ENCODE measurements at regions of chr2 and their contacts with region 1.

Region 1: DNA sequence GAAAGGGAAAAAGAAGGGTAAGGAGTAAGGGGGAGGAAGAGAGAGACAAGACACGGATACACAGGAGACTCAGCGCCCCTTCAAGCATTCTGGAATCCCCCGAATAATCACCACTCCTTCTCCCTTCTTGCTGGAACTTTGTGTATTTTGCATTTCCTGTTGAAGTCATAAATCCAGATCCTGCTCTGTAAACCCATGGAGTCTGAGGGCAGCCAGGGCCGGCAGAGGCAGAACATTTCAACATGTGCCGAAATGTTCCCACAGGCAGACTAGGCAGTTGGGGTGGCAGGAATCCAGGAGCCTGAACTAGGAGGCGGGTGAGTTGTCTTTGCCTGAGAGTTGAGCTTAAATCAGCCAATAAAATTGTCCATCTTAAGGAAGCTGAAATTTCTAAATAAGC is 193.1 kb downstream of the SH3RF3 start:
- DNase-seq: peak; percentile 92
- ATAC-seq: peak; percentile 58 to 75

Region 2: DNA sequence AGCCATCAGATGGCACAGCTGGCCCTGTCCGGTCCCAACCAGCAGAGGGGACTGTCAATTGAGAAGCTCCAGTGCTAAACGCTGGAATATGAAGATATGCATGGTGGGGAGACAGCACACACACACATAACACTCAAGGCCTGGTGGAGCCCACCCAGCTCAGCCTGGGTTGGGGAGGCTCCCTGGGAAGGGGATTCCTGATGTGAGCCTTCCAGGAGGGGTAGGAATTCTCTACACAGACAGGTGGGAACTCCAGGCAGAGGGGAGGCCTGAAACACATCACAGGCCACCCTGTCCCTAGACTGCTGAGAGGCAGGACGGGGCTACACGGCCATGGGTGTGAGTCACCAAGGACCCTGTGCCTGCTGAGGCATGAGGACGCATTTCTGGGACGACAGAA is 242.5 kb before region 1 on chr2:
- intact Hi-C with region 1: no loop called
- DNase-seq: no peak
- ATAC-seq: no peak

Region 3: DNA sequence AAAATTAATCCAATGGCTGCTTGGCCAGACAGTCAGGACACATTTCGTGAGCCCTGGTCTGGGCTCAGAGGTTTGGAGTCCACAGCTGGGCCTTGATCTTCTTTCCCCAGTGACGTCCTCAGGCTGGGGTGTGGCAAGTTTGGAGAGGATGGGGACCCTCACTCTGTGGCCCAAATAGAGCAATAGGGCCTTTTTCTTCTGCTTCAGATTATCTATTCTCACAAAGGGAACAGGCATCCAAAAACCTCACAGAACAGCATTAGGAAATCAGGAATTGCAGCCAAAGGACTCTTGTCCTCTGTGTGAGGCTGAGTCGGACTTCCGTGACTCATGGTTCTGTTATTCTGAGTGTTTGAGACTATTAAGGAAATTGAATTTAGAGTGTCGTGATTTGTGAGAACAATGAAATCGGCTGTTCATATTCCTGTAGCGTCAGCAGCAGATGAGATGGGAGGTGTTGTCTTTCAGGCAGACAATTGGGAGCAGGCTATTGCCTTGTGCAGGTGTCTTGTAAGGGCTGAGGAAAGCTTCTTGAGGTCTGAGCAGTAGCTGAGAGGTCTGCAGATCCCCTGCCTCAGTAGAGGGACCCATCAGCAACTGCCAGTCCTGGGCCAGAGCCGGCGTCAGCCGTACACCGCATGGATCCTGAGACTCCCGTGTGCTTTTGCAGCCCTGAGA is 79.3 kb before region 1 on chr2:
- intact Hi-C with region 1: loop called in 1 of 2 experiments (anchors 10 kb)
- DNase-seq: peak; percentile 42
- ATAC-seq: peak; percentile 74 to 81

Region 4: DNA sequence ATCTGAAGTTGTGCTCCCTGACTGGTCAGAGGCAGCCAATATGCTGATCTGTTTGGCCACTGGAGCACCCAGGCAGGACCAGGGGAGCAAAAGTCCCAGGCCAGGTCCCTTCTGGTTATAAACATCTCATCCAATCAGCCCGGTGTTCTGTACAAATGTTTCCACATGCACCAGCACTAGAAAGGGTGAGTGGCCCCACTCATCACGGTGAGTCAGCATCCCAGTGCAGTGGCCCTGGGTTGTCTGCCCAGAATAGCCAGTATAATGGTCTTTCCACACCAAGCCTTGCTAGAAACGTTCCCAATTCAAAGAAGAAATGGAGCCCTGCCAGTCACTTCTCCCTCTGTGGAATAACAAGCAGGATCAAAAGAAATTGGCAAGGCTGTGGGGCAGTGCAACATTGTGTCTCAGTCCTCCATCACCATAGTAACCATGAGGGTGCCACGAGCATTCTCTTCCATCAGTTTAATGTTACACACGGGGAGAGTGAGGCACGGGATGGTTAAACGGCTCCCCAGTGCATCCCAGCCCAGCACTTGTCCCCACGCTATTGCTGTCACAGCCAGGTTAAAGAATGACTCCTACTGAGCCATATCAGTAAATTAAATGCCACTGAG is 116.8 kb after region 1 on chr2:
- intact Hi-C with region 1: loop called in 1 of 2 experiments (anchors 5 kb)
- DNase-seq: peak; percentile 49
- ATAC-seq: peak; percentile 56 to 82